ENCODE measurements at regions of chr7 and their contacts with region 1.

Region 1: GRCh38 chr7:66114793-66115649 is at the start of gene CRCP:
- DNase-seq: peak; percentile 91
- H3K4me3 ChIP-seq: peak within 1 kb of the TSS; percentile 68 to 99 (median 95)
- H3K27ac ChIP-seq: peak within 1 kb of the TSS; percentile 94 to 99 (median 98)
- H3K4me1 ChIP-seq: peaks cover 0 to 46% (median 29%) of the 10 kb centered on the region in 4 donors
- H3K27me3 ChIP-seq: no peaks in the 10 kb centered on the region
- CTCF ChIP-seq: peak in 1 of 4 experiments; percentile 16
- EP300 ChIP-seq: no peak
- POLR2A ChIP-seq: peak; percentile 4 to 42
- total RNA-seq, gene CRCP: 24.1 to 48.5 (median 37.1) TPM

Region 2: DNA sequence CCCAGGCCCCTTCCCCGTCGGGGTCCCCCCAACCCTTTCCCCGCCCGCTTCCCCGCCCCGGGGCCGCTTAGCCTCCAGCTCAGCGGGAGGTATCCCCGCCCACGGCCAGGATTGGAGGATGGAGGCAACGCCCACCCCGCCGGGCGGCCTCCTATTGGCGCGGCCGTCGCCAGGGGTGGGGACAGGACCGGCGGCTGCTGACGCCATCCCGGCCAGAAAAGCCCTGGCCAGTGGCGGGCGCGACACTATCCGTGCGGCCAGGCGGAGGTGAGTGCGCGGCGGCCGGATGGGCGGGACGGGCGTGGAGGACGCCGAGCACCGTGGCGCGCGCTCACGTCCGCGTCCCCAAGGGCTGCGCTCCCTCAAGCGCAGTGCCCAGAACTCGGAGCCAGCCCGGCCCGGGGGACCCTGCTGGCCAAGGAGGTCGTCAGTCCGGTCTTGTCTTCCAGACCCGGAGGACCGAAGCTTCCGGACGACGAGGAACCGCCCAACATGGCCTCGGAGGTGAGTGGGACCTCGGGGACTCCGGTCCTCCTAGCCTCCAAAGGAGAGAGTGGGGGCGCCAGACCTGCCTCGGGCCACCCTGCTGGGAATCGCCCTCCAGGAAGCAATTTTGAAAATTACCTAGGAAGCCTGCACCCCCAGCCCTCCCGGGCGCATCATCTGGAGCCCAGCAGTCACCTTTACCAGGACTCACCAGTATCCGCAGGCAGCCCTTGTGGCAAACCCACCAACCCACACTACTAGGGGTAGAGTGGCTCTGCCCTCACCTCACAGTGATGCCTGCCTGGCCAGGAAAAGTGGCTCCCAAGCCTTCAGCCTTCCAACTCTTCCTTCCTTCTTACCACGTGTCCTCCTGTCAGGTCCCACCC is 39.2 kb before region 1 on chr7 and contains the start of gene ASL:
- intact Hi-C with region 1: loop called (anchors 2 kb)
- DNase-seq: peak; percentile 97
- H3K4me3 ChIP-seq: peak within 1 kb of the TSS; percentile 62 to 87 (median 66)
- H3K27ac ChIP-seq: peak within 1 kb of the TSS; percentile 56 to 67 (median 64)
- H3K4me1 ChIP-seq: peaks cover 0 to 23% (median 14%) of the 10 kb centered on the region in 4 donors
- H3K27me3 ChIP-seq: no peaks in the 10 kb centered on the region
- CTCF ChIP-seq: no peak
- EP300 ChIP-seq: no peak
- POLR2A ChIP-seq: peak; percentile 13 to 62
- total RNA-seq, gene ASL: 15.6 to 30.7 (median 24.2) TPM

Region 3: GRCh38 chr7:66099616-66100474 is 15.2 kb before region 1 on chr7:
- intact Hi-C with region 1: loop called (anchors 2 kb)
- DNase-seq: peak; percentile 92
- H3K4me3 ChIP-seq: peak overlapping the region; percentile 23 to 44 (median 40)
- H3K27ac ChIP-seq: peak overlapping the region; percentile 78 to 80 (median 80)
- H3K4me1 ChIP-seq: peaks cover 0 to 13% (median 11%) of the 10 kb centered on the region in 4 donors
- H3K27me3 ChIP-seq: no peaks in the 10 kb centered on the region
- CTCF ChIP-seq: no peak
- EP300 ChIP-seq: no peak
- POLR2A ChIP-seq: peak; percentile 21 to 53

Region 4: GRCh38 chr7:66150471-66150870 is 35.5 kb after region 1 on chr7:
- intact Hi-C with region 1: no loop called
- DNase-seq: peak; percentile 80
- H3K4me3 ChIP-seq: no peak overlapping the region
- H3K27ac ChIP-seq: peak overlapping the region; percentile 46 to 71 (median 60)
- H3K4me1 ChIP-seq: peaks cover 0 to 28% (median 20%) of the 10 kb centered on the region in 4 donors
- H3K27me3 ChIP-seq: no peaks in the 10 kb centered on the region
- CTCF ChIP-seq: no peak
- EP300 ChIP-seq: no peak
- POLR2A ChIP-seq: no peak

Measured in sigmoid colon (tissue), 7 donors.